Common myeloid progenitor, CD34-positive (primary cell): ENCODE measurements at regions of chr10 and their contacts with region 1.

Region 1: DNA sequence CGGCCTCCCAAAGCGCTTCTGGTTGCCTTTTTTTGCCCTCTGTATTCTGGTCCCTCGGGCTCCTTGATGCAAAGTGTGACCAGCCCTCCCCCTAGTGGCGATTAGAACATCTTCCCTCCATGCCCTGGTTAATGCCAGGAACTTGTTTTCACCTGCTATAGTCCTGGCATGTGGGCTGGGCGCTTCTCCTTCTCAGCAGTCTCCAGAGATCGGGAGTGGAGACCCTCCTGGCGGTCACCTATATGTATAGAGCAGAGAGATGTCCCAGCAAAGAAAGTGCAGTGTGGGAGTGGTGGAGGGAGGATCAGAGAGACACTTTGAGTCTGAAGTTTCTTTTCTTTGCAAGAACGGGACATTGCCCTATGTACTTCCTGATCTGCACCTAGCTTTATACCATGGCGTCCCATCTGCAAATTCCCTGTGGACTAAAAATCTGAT is 264.1 kb downstream of the OTUD1 start:
- DNase-seq: peak; percentile 62 to 81 (median 79)
- H3K4me3 ChIP-seq: peak overlapping the region in 2 of 7 experiments; percentile 13 to 36
- H3K27ac ChIP-seq: no peak overlapping the region
- H3K4me1 ChIP-seq: peaks cover 0 to 3% (median 0%) of the 10 kb centered on the region in 4 experiments
- H3K27me3 ChIP-seq: peaks cover 0 to 23% (median 4%) of the 10 kb centered on the region in 5 experiments

Region 2: DNA sequence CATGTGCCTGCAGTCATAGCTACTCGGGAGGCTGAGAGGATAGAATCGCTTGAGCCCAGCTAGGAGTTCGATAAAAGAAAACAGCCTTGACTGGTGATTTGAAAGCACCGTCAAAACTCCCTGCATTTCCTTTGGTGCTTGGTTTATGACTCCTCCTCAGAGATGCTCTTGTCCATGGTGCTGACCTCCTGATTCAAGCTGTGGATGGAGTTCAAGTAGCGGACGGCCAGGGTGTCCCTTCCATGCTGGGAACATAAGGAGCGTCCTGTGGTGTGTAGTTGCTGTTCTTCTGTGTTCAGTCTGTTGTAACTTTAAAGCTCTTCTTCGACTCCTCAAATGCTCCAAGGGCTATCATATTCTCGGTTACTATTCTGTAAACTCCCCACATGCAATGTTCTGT is 123.4 kb after region 1 on chr10:
- CTCF ChIA-PET with region 1: no interaction called
- POLR2A ChIA-PET with region 1: interaction called, 14 read pairs
- DNase-seq: peak; percentile 21 to 58 (median 56)
- H3K4me3 ChIP-seq: no peak overlapping the region
- H3K27ac ChIP-seq: no peak overlapping the region
- H3K4me1 ChIP-seq: no peaks in the 10 kb centered on the region
- H3K27me3 ChIP-seq: no peaks in the 10 kb centered on the region